Right ventricle myocardium inferior (tissue), 1 donor: ENCODE measurements at regions of chr6 and their contacts with region 1.

Region 1: GRCh38 chr6:39302669-39303424 is 11.4 kb downstream of the KCNK17 start:
- DNase-seq: peak; percentile 89
- ATAC-seq: peak; percentile 85

Region 2: GRCh38 chr6:38973178-38974054 is 329.4 kb before region 1 on chr6:
- intact Hi-C with region 1: loop called (anchors 2 kb)
- DNase-seq: no peak
- ATAC-seq: peak; percentile 71

Region 3: GRCh38 chr6:39166189-39166911 is 136.5 kb before region 1 on chr6:
- intact Hi-C with region 1: loop called (anchors 2 kb)
- DNase-seq: peak; percentile 86
- ATAC-seq: peak; percentile 68